ENCODE measurements at regions of chrX and their contacts with region 1.

Region 1: GRCh38 chrX:24259544-24260240 is 54.2 kb downstream of the SUPT20HL2 start:
- DNase-seq: peak; percentile 56
- ATAC-seq: peak; percentile 73
- H3K4me3 ChIP-seq: no peak overlapping the region
- H3K27ac ChIP-seq: no peak overlapping the region
- H3K4me1 ChIP-seq: peaks cover 10% of the 10 kb centered on the region; the same call in 1 of the 2 replicates
- H3K27me3 ChIP-seq: no peaks in the 10 kb centered on the region
- CTCF ChIP-seq: peak; percentile 65
- EP300 ChIP-seq: no peak
- POLR2A ChIP-seq: no peak
- RAD21 ChIP-seq: peak; percentile 34

Region 2: DNA sequence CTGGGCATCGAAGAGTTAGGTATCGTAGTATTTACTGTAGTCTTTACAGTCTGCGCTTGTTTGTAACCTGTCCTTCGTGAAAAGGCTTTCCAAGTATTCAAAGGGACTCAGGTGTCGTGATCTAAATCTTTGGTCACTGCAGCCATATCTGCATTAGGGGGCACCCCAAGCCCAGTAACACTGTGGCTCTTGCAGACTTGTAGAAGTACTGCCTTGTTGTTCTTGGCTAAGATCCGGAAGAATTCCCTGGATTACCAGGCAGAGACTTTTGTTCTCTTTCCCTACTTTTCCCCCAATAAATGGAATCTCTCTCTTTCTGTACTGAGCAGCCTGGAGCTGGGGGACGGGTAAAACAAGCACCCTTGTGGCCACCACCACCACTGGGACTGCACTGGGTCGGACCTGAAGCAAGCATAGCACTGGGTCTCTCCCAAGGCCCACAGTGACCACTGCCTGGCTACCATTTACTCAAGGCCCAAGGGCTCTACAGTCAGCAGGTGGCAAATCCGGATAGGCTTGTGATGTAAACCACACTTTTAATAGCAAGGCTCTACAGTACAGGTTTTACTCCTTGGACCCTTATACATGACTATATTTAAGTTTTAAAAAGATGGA is 339.9 kb before region 1 on chrX:
- CTCF ChIA-PET with region 1: no interaction called
- POLR2A ChIA-PET with region 1: no interaction called
- in situ Hi-C with region 1: no loop called
- intact Hi-C with region 1: no loop called
- DNase-seq: peak; percentile 30
- ATAC-seq: peak; percentile 84
- H3K4me3 ChIP-seq: no peak overlapping the region; a peak in 2 of 6 replicates
- H3K27ac ChIP-seq: no peak overlapping the region
- H3K4me1 ChIP-seq: no peaks in the 10 kb centered on the region
- H3K27me3 ChIP-seq: no peaks in the 10 kb centered on the region
- CTCF ChIP-seq: peak; percentile 65
- EP300 ChIP-seq: no peak
- POLR2A ChIP-seq: no peak
- RAD21 ChIP-seq: no peak

Region 3: GRCh38 chrX:24306440-24306839 is 46.7 kb after region 1 on chrX:
- CTCF ChIA-PET with region 1: no interaction called
- POLR2A ChIA-PET with region 1: no interaction called
- in situ Hi-C with region 1: no loop called
- intact Hi-C with region 1: loop called (anchors 2 kb)
- DNase-seq: peak; percentile 21
- ATAC-seq: peak; percentile 78
- H3K4me3 ChIP-seq: no peak overlapping the region
- H3K27ac ChIP-seq: no peak overlapping the region
- H3K4me1 ChIP-seq: no peaks in the 10 kb centered on the region
- H3K27me3 ChIP-seq: no peaks in the 10 kb centered on the region
- CTCF ChIP-seq: peak; percentile 55
- EP300 ChIP-seq: no peak
- POLR2A ChIP-seq: no peak
- RAD21 ChIP-seq: no peak

Measured in HepG2 (cell line).